ENCODE measurements at regions of chr2 and their contacts with region 1.

Region 1: GRCh38 chr2:225788571-225789094 is 389.1 kb downstream of the NYAP2 start:
- DNase-seq: no peak
- ATAC-seq: no peak
- H3K4me3 ChIP-seq: no peak overlapping the region
- H3K27ac ChIP-seq: no peak overlapping the region
- H3K4me1 ChIP-seq: no peaks in the 10 kb centered on the region
- H3K27me3 ChIP-seq: no peaks in the 10 kb centered on the region
- CTCF ChIP-seq: no peak

Region 2: DNA sequence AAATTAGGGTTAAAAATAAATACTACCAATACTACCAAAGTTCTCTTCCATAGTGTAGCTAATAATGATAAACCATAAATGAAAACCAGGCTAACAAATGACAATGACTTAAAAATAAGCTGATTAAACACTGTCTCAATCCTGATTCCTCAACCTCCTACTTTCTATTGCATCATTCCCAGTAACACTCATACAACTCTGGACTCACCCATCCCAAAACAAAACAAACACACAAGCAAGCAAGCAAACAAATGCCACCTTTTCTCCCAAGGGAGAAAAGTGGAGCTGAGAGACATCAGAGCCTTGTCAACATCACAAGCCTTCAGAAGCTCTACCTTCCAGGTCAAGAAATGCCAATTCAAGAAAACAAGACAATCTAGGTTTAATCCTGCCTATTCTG is 231.5 kb after region 1 on chr2:
- CTCF ChIA-PET with region 1: no interaction called
- POLR2A ChIA-PET with region 1: no interaction called
- in situ Hi-C with region 1: no loop called
- intact Hi-C with region 1: loop called (anchors 2 kb)
- DNase-seq: no peak
- ATAC-seq: no peak
- H3K4me3 ChIP-seq: no peak overlapping the region
- H3K27ac ChIP-seq: no peak overlapping the region; the same call in 1 of the 2 replicates
- H3K4me1 ChIP-seq: no peaks in the 10 kb centered on the region
- H3K27me3 ChIP-seq: no peaks in the 10 kb centered on the region
- CTCF ChIP-seq: no peak